B cell (primary cell): ENCODE measurements at regions of chr6 and their contacts with region 1.

Region 1: DNA sequence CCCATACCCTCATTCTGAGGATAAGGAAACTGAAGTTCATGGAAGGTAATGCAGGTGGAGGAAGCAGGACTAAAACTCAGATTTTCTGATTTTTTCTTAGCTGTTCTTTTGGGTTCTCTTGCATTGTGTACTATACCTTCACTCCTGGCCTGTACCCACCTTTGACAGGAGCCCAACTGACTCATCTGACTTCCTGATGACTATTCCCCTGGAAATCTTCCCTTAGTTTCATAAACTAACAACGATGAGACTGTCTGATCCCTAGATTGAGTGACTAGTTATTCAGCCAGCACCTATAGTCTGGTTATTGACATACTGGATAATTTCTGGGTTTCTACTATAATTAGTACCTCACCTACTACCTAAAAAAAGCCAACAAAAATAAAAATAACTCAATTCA is 10.1 kb downstream of the CRYBG1 start:
- DNase-seq: no peak
- ATAC-seq: no peak
- H3K4me3 ChIP-seq: no peak overlapping the region
- H3K4me3 Mint-ChIP-seq: no peak overlapping the region
- H3K27ac ChIP-seq: no peak overlapping the region
- H3K27ac Mint-ChIP-seq: no peak overlapping the region
- H3K4me1 ChIP-seq: no peaks in the 10 kb centered on the region
- H3K4me1 Mint-ChIP-seq: no peaks in the 10 kb centered on the region
- H3K27me3 ChIP-seq: peaks cover 0 to 3% (median 0%) of the 10 kb centered on the region in 4 experiments
- H3K27me3 Mint-ChIP-seq: peaks cover 11% of the 10 kb centered on the region
- CTCF ChIP-seq: no peak

Region 2: DNA sequence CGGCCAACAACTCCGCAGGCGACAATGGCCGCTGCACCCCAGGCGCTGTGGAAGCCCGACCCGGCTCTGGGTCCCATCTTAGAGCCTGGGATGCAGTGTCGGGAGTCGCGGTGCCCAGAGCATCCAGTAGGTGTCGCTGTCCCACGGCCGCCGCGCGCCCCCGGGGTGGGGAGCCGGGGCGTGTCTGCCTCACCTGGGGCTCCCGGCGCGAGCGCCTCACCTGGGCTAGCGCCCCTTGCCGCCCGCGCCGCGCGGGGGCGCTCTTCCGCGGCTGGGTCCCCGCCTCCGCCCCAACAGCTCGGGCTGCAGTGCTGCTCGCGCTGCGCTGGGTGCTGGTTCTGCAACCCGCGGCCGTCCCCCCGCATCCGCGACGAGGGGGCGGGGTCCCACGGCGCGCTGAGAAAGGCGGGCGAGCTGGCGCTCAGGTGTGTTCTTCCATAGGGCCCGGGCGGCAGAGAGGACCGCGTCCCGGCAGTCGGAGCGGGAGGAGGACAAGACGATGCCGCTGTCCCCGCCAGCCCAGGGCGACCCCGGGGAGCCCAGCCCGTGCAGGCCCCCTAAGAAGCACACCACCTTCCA is 10.1 kb before region 1 on chr6 and contains the start of gene CRYBG1:
- CTCF ChIA-PET with region 1: interaction called, 15 read pairs
- POLR2A ChIA-PET with region 1: no interaction called
- intact Hi-C with region 1: no loop called
- DNase-seq: peak; percentile 78
- ATAC-seq: peak; percentile 83
- H3K4me3 ChIP-seq: peak within 1 kb of the TSS in 4 of 5 experiments; percentile 41 to 60 (median 50)
- H3K4me3 Mint-ChIP-seq: peak within 1 kb of the TSS; percentile 90
- H3K27ac ChIP-seq: no peak within 1 kb of the TSS
- H3K27ac Mint-ChIP-seq: peak within 1 kb of the TSS; percentile 53
- H3K4me1 ChIP-seq: peaks cover 11 to 16% of the 10 kb centered on the region in 2 donors
- H3K4me1 Mint-ChIP-seq: peaks cover 11% of the 10 kb centered on the region
- H3K27me3 ChIP-seq: peaks cover 0 to 38% (median 28%) of the 10 kb centered on the region in 4 experiments
- H3K27me3 Mint-ChIP-seq: peaks cover 47% of the 10 kb centered on the region
- CTCF ChIP-seq: peak; percentile 90
- total RNA-seq, gene CRYBG1: 47.0 and 47.2 TPM in 2 replicates

Region 3: DNA sequence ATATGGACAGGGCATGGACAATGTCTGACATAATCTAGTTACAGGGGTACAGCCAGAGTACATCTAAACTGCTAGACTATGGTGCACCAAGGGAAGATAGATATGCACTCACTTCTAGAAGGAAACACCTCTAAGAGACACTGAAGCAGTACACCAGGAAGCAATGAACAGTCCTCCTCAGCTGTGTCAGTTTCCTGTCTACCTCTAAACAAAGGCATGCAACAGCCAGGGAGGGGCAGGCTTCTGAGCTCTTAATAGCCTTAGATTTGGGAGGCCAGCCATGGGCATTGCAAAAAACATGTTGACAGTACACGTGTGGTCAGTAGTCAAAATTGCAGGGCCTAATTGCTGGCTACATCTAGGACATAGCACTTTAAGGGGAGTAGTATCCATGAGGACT is 11.2 kb after region 1 on chr6:
- CTCF ChIA-PET with region 1: no interaction called
- POLR2A ChIA-PET with region 1: no interaction called
- intact Hi-C with region 1: no loop called
- DNase-seq: no peak
- ATAC-seq: no peak
- H3K4me3 ChIP-seq: no peak overlapping the region
- H3K4me3 Mint-ChIP-seq: no peak overlapping the region
- H3K27ac ChIP-seq: no peak overlapping the region
- H3K27ac Mint-ChIP-seq: no peak overlapping the region
- H3K4me1 ChIP-seq: no peaks in the 10 kb centered on the region
- H3K4me1 Mint-ChIP-seq: peaks cover 3% of the 10 kb centered on the region
- H3K27me3 ChIP-seq: peaks cover 0 to 3% (median 0%) of the 10 kb centered on the region in 4 experiments
- H3K27me3 Mint-ChIP-seq: peaks cover 15% of the 10 kb centered on the region
- CTCF ChIP-seq: no peak

Region 4: GRCh38 chr6:107237992-107238660 is 867.5 kb after region 1 on chr6:
- CTCF ChIA-PET with region 1: no interaction called
- POLR2A ChIA-PET with region 1: no interaction called
- intact Hi-C with region 1: no loop called
- DNase-seq: no peak
- ATAC-seq: no peak
- H3K4me3 ChIP-seq: no peak overlapping the region
- H3K4me3 Mint-ChIP-seq: no peak overlapping the region
- H3K27ac ChIP-seq: no peak overlapping the region
- H3K27ac Mint-ChIP-seq: no peak overlapping the region
- H3K4me1 ChIP-seq: no peaks in the 10 kb centered on the region
- H3K4me1 Mint-ChIP-seq: no peaks in the 10 kb centered on the region
- H3K27me3 ChIP-seq: no peaks in the 10 kb centered on the region
- H3K27me3 Mint-ChIP-seq: no peaks in the 10 kb centered on the region
- CTCF ChIP-seq: no peak